ENCODE measurements at regions of chr10 and their contacts with region 1.

Region 1: DNA sequence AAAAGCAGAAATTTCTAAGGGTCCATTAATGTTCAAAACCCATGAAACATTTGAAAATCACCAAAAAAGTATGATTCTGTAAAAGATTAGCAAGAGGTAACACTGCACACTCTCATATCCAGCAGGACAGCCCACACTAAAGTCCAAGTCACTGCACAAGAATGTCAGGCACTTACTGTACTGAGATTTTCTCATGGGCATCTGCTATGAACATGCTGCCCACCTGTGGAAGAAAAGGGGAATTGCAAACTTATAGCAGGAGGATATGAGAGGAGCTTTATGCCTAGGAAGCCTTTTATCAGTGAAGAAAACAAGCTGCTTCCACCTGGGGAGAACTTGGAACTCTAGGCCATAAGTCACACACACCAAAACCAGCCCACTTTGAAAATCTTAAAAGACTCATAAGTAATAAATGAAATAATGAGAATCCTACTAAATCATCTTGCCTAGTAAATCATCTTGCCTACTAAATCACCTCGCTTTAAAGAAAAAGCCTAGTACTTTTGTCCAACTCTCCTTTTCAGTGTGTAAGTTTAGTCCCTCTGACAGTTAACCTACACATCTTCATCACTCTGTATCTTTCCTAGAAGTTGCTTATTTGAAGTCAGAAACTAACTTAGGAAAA is 46.1 kb downstream of the ARMH3 start:
- DNase-seq: peak; percentile 75
- CTCF ChIP-seq: peak; percentile 95

Region 2: GRCh38 chr10:101840741-101841453 is 169.0 kb before region 1 on chr10:
- in situ Hi-C with region 1: loop called (anchors 5 kb)
- DNase-seq: peak; percentile 92
- CTCF ChIP-seq: peak; percentile 99

Region 3: DNA sequence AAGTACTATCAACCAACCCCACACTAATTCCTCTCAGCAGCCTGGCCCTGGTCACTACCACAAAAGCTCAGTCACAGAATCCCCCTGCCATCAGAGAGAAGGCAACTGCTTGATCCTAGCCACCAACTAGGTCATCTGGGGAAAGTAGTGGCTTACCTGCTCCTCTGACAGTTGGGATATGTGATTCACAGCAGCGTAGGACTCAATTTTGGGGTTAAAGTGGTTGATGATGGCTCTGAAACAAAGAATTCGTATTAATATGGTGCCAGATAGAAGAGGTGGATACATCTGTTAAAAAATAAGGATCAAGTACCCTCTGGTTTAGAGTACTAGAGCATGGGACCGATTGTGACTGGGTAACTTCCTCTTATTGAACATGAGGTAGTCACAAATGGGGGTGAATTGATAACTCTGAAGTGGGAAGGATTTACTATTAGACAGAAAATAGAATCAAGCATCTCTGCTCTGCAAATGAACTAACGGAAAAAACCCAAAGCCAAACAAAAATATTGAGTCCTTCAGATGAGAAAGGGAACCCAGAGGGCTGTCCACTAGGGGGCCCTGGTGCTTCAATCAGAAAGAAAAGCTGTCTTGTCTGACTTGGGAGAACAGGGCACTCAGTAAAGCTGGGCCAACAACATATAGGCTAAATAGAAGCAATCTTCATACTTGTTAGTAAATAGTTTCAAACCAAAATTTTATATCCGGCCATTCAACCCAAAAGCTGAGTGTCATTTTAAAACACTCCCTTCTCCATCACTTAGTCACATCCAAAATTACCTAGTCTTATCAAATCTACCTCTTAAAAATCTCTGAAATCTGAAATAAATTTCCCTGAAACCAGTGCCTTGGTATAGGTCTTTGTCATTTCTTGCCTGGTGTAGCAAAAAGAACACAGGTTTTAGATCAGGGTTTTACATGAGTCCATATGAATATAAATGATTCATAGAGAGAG is 120.4 kb before region 1 on chr10:
- in situ Hi-C with region 1: loop called (anchors 10 kb)
- DNase-seq: peak; percentile 65
- CTCF ChIP-seq: peak; percentile 83

Measured in GM13977 (cell line).